ENCODE measurements at regions of chr5 and their contacts with region 1.

Region 1: GRCh38 chr5:132293066-132293991 is 865 bp upstream of the SLC22A4 start:
- DNase-seq: peak; percentile 76

Region 2: DNA sequence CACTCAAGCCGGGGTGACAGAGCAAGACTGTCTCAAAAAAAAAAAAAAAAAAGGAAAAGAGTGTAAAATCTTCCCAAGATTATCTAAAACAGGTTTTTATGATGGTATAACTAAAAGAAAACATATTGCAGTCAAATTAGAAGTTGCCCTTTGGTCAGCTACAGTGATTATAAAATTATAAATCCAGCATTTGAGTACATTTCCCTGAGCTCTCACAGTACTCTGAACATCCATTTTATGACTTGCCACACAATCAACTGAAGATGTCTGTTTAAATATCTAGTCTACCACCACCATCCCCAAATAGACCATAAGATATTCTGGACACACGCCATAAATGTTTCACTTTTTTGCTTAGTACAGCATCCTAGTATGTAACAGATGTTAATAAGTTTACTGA is 142.8 kb before region 1 on chr5:
- CTCF ChIA-PET with region 1: no interaction called
- POLR2A ChIA-PET with region 1: no interaction called
- DNase-seq: no peak

Region 3: GRCh38 chr5:132265336-132266030 is 27.8 kb before region 1 on chr5:
- CTCF ChIA-PET with region 1: no interaction called
- POLR2A ChIA-PET with region 1: interaction called, 19 read pairs
- DNase-seq: no peak

Region 4: GRCh38 chr5:132281855-132282614 is 11.3 kb before region 1 on chr5:
- CTCF ChIA-PET with region 1: interaction called, 5 read pairs
- POLR2A ChIA-PET with region 1: interaction called, 32 read pairs
- DNase-seq: no peak

Region 5: GRCh38 chr5:132323202-132323601 is 29.9 kb after region 1 on chr5:
- CTCF ChIA-PET with region 1: no interaction called
- POLR2A ChIA-PET with region 1: interaction called, 15 read pairs
- DNase-seq: no peak

Region 6: DNA sequence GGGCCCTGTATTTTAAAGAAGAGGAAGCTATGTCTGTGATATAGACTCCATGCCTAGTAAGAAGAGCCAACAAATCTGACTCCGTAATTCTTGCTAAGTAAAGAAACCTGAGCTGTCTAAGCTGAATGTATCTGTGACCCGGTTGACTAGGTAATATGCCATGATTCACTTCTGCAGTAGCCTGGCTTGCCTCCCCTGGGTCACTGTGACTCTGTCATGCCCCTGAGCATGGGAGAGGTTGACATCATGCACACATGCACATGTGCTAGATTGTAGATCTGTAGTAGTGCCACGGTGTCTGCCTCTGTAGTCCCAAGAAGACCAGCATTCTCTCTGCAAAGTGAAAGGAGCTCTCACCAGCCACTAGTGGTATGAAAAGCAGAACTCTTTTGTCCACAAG is 85.3 kb after region 1 on chr5:
- CTCF ChIA-PET with region 1: no interaction called
- POLR2A ChIA-PET with region 1: interaction called, 22 read pairs
- DNase-seq: no peak

Region 7: GRCh38 chr5:132490486-132491367 is 197.4 kb after region 1 on chr5 and contains the start of gene IRF1:
- CTCF ChIA-PET with region 1: no interaction called
- POLR2A ChIA-PET with region 1: interaction called, 25 read pairs
- DNase-seq: peak; percentile 95

Measured in HEK293T (cell line).